Tibial artery (tissue), 4 donors: ENCODE measurements at regions of chr13 and their contacts with region 1.

Region 1: GRCh38 chr13:111216166-111216960 is 101.3 kb downstream of the ARHGEF7 start:
- DNase-seq: peak in 1 of 2 donors; percentile 78
- H3K4me3 ChIP-seq: no peak overlapping the region
- H3K27ac ChIP-seq: peak overlapping the region; percentile 73 to 76
- H3K4me1 ChIP-seq: peaks cover 0 to 93% (median 62%) of the 10 kb centered on the region in 4 donors
- H3K27me3 ChIP-seq: no peaks in the 10 kb centered on the region
- CTCF ChIP-seq: peak; percentile 38 to 45

Region 2: GRCh38 chr13:111066544-111066943 is 149.8 kb before region 1 on chr13:
- intact Hi-C with region 1: loop called (anchors 5 kb)
- DNase-seq: no peak
- H3K4me3 ChIP-seq: peak overlapping the region; percentile 54 to 69
- H3K27ac ChIP-seq: no peak overlapping the region
- H3K4me1 ChIP-seq: peaks cover 0 to 7% (median 1%) of the 10 kb centered on the region in 4 donors
- H3K27me3 ChIP-seq: no peaks in the 10 kb centered on the region
- CTCF ChIP-seq: no peak

Region 3: DNA sequence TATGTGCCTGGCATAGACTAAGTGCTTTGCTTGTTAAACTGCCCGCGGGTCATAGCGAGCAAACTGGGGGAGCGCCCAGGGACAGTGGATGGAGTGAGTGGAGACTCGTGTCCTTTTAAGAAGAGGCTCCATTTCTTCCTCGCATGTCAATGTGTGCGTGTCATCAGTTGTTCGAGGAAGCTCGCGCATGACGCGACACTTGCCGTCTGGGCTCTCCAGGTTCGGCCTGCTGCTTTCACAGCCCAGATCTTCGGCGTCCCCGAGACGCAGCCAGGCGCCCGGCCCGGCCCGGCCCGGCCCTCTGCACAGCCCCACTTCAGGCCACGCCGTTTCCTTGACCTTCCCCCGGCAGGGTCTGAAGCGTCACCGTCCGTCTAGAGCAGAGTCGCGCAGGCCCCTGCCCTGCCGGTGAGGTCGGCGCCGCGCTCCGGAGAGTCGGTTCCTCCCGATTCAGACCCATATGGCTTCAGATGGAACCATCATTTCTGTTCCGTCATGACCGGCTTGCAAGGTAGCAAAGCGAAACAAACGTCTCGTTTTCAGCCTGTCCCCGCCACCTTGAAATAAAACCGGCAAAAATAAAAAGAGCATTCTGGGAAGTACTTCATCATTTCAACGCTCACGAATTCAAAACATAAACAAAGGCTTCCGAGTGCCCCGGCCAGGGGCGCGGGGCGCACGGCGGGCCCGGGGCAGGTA is 101.9 kb before region 1 on chr13:
- intact Hi-C with region 1: loop called (anchors 5 kb)
- DNase-seq: peak; percentile 61 to 81
- H3K4me3 ChIP-seq: peak overlapping the region; percentile 76 to 78
- H3K27ac ChIP-seq: peak overlapping the region; percentile 90
- H3K4me1 ChIP-seq: peaks cover 0 to 42% (median 19%) of the 10 kb centered on the region in 4 donors
- H3K27me3 ChIP-seq: no peaks in the 10 kb centered on the region
- CTCF ChIP-seq: no peak

Region 4: GRCh38 chr13:111153279-111153976 is 62.9 kb before region 1 on chr13:
- intact Hi-C with region 1: loop called (anchors 5 kb)
- DNase-seq: peak; percentile 89 to 95
- H3K4me3 ChIP-seq: peak overlapping the region; percentile 84 to 91
- H3K27ac ChIP-seq: peak overlapping the region; percentile 98
- H3K4me1 ChIP-seq: peaks cover 0 to 83% (median 37%) of the 10 kb centered on the region in 4 donors
- H3K27me3 ChIP-seq: no peaks in the 10 kb centered on the region
- CTCF ChIP-seq: peak in 1 of 2 experiments; percentile 39

Region 5: DNA sequence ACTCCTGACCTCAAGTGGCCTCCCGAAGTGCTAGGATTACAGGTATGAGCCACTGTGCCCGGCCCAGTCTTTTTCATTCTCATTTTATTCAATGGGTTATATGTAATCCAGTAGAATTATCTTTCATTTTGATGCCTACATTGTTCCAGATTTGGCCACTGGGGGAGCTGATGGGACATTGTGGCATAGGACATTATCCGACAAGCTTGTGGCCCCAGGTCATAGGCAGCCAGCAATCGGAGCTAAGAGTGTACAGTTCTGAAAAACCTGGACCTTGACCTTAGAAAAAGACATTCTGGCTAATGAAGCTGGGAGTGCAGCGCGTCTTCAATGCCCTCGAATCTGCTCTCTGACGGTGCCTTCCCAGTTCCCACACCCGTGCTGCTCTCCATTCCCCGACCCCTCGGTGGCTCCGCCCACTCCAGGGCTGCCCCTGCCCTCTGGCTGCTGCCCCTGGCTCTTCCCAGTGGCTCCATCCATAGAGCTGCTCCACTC is 212.7 kb after region 1 on chr13:
- intact Hi-C with region 1: no loop called
- DNase-seq: no peak
- H3K4me3 ChIP-seq: no peak overlapping the region
- H3K27ac ChIP-seq: no peak overlapping the region
- H3K4me1 ChIP-seq: no peaks in the 10 kb centered on the region
- H3K27me3 ChIP-seq: peaks cover 0 to 19% of the 10 kb centered on the region in 2 donors
- CTCF ChIP-seq: peak; percentile 23 to 42